ENCODE measurements at regions of chr10 and their contacts with region 1.

Region 1: DNA sequence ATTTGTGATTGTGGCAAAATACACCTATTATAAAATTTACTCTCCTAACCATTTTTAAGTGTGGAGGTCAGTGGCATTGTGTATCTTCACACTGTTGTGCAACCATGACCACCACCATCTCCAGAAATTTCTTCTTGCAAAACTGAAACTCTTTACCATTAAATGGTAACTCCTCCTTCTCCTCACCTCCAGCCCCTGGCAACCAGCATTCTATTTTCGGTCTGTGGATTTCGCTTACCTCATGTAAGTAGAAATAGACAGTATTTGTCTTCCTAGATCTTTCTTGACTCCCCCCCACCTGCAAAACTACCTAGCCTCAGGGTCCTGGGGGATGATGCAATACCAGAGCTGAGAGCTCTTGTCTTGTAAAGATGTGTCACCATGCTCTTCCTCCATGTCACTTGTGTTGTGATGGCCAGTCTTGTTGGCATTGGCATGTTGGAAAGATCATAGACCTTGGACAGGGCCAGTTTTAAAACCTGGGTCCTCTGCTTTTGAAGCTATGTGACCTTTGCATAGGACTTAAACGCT is 71.1 kb upstream of the EMX2 start:
- DNase-seq: no peak
- ATAC-seq: no peak
- H3K4me3 ChIP-seq: no peak overlapping the region
- H3K27ac ChIP-seq: no peak overlapping the region
- H3K4me1 ChIP-seq: no peaks in the 10 kb centered on the region
- H3K27me3 ChIP-seq: peaks cover 7% of the 10 kb centered on the region
- CTCF ChIP-seq: no peak

Region 2: DNA sequence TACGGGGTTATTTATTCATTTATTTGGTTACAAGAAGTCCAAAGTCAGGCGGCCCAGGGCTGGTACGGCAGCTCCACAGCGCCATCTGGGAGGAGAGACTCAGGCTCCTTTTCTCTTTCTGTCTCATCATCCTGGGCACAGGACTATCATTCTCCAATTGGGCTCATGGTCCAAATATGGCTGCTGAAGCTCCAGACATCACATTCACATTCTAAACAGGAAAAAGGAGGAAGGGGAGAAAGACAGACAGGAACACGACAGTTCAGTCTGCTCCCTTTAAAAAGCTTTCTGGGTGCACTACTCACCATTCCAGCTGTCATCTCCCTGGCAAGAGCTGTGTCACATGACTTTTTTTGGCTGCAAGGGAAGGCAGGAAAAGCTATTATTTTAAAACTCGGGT is 21.8 kb before region 1 on chr10:
- CTCF ChIA-PET with region 1: no interaction called
- POLR2A ChIA-PET with region 1: interaction called, 10 read pairs
- in situ Hi-C with region 1: no loop called
- intact Hi-C with region 1: no loop called
- DNase-seq: no peak
- ATAC-seq: no peak
- H3K4me3 ChIP-seq: no peak overlapping the region
- H3K27ac ChIP-seq: no peak overlapping the region
- H3K4me1 ChIP-seq: no peaks in the 10 kb centered on the region
- H3K27me3 ChIP-seq: no peaks in the 10 kb centered on the region
- CTCF ChIP-seq: no peak; the same call in 1 of the 2 replicates

Measured in Panc1 (cell line).